MCF 10A (cell line): ENCODE measurements at regions of chr5 and their contacts with region 1.

Region 1: GRCh38 chr5:149828161-149828884 is 98.2 kb downstream of the PPARGC1B start:
- DNase-seq: peak; percentile 99
- H3K4me3 Mint-ChIP-seq: no peak overlapping the region
- H3K27ac Mint-ChIP-seq: peak overlapping the region; percentile 57
- H3K4me1 Mint-ChIP-seq: peaks cover 12% of the 10 kb centered on the region
- H3K27me3 Mint-ChIP-seq: no peaks in the 10 kb centered on the region
- CTCF ChIP-seq: peak; percentile 96

Region 2: DNA sequence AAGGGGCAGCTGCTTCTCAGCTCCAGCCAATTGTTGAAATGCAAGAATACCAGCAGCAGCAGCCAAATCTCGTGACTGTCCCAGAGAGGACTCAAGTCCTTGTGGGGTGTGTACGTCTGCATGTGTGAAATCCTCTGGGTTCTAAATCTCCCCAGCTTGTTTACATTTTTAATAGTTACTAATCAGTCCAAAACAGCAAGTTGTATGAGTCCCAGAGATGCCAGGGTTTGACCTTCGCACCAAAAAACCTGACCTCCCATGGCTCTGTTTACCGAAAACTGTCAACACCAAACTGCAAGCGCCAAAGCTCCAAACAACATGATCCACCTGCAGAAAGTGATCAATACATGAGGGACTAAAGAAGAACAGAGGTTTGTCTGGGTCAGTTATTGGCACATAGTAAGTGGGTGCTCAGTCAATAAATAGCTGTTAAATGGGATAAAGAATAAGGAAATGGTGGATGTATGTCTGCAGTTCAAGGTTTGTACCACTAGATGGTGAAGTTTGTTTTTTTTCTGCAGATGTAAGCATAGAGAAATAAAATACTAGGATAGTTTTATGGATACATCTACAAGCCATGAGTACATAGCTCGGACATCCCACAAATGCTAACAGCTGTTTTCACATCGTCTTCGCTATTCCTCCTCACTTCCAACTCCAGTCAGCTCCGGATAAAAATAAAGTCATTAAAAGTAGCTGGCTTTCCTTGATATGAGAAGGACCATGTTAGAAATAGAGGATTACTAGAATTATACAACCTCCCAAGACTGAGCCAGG is 1087.2 kb before region 1 on chr5:
- CTCF ChIA-PET with region 1: no interaction called
- POLR2A ChIA-PET with region 1: no interaction called
- intact Hi-C with region 1: no loop called
- DNase-seq: peak; percentile 77
- H3K4me3 Mint-ChIP-seq: no peak overlapping the region
- H3K27ac Mint-ChIP-seq: no peak overlapping the region
- H3K4me1 Mint-ChIP-seq: peaks cover 5% of the 10 kb centered on the region
- H3K27me3 Mint-ChIP-seq: no peaks in the 10 kb centered on the region
- CTCF ChIP-seq: peak; percentile 88

Region 3: GRCh38 chr5:149381987-149382340 is 446.4 kb before region 1 on chr5:
- CTCF ChIA-PET with region 1: interaction called, 5 read pairs
- POLR2A ChIA-PET with region 1: no interaction called
- intact Hi-C with region 1: loop called (anchors 5 kb)
- DNase-seq: peak; percentile 78
- H3K4me3 Mint-ChIP-seq: no peak overlapping the region
- H3K27ac Mint-ChIP-seq: no peak overlapping the region
- H3K4me1 Mint-ChIP-seq: no peaks in the 10 kb centered on the region
- H3K27me3 Mint-ChIP-seq: no peaks in the 10 kb centered on the region
- CTCF ChIP-seq: peak; percentile 97

Region 4: GRCh38 chr5:149656576-149657182 is 171.6 kb before region 1 on chr5:
- CTCF ChIA-PET with region 1: interaction called, 12 read pairs
- POLR2A ChIA-PET with region 1: no interaction called
- intact Hi-C with region 1: loop called (anchors 1 kb)
- DNase-seq: peak; percentile 80
- H3K4me3 Mint-ChIP-seq: no peak overlapping the region
- H3K27ac Mint-ChIP-seq: no peak overlapping the region
- H3K4me1 Mint-ChIP-seq: no peaks in the 10 kb centered on the region
- H3K27me3 Mint-ChIP-seq: peaks cover 21% of the 10 kb centered on the region
- CTCF ChIP-seq: peak; percentile 85

Region 5: GRCh38 chr5:149731639-149732323 is 96.5 kb before region 1 on chr5:
- CTCF ChIA-PET with region 1: interaction called, 9 read pairs
- POLR2A ChIA-PET with region 1: interaction called, 4 read pairs
- intact Hi-C with region 1: loop called (anchors 1 kb)
- DNase-seq: peak; percentile 95
- H3K4me3 Mint-ChIP-seq: peak overlapping the region; percentile 94
- H3K27ac Mint-ChIP-seq: peak overlapping the region; percentile 66
- H3K4me1 Mint-ChIP-seq: peaks cover 27% of the 10 kb centered on the region
- H3K27me3 Mint-ChIP-seq: no peaks in the 10 kb centered on the region
- CTCF ChIP-seq: no peak

Region 6: DNA sequence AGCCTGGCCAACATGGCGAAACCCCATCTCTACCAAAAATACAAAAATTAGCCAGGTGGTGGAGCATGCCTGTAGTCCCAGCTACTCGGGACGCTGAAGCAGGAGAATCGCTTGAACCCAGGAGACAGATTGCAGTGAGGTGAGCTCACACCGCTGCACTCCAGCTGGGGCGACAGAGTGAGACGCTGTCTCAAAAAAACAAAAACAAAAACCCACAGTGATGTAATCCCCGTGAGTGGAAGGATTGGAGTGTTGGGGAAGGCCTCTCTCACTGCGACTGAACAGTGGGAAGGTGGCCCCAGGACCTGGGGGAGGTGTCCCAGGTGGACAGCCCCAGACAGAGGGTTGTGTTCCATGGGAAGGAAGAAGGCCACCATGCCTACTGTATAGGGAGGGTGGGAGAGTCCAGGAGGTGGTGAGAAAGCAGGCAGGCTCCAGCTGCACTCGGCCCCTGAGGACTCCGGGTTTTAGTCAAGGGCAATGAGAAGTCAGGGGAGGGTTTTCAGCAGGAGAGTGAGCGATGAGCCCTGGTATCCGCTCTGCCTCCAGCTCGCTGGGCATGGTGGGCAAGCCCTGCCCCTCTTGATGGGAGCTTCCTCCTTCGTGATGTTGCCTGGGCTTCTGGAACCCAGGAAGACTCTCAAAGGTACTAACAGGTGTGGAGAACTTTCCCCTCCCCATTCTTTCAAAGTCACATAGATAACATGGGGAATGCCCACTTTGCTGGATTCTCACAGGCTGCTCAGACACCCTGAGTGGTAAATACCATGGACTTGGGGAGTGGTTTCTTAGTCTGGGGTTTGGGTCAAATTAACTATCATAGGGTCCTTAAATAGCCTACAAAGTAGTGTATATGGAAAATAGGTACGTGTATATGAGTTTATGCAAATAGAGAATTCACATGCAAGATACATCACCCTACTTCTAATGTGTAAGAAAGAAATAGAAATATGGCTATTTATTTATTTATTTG is 23.6 kb before region 1 on chr5:
- CTCF ChIA-PET with region 1: interaction called, 20 read pairs
- POLR2A ChIA-PET with region 1: interaction called, 6 read pairs
- intact Hi-C with region 1: no loop called
- DNase-seq: no peak
- H3K4me3 Mint-ChIP-seq: no peak overlapping the region
- H3K27ac Mint-ChIP-seq: peak overlapping the region; percentile 57
- H3K4me1 Mint-ChIP-seq: peaks cover 39% of the 10 kb centered on the region
- H3K27me3 Mint-ChIP-seq: no peaks in the 10 kb centered on the region
- CTCF ChIP-seq: no peak

Region 7: GRCh38 chr5:149852641-149853330 is 24.5 kb after region 1 on chr5:
- CTCF ChIA-PET with region 1: interaction called, 845 read pairs
- POLR2A ChIA-PET with region 1: interaction called, 5 read pairs
- intact Hi-C with region 1: no loop called
- DNase-seq: peak; percentile 91
- H3K4me3 Mint-ChIP-seq: no peak overlapping the region
- H3K27ac Mint-ChIP-seq: peak overlapping the region; percentile 16
- H3K4me1 Mint-ChIP-seq: peaks cover 17% of the 10 kb centered on the region
- H3K27me3 Mint-ChIP-seq: no peaks in the 10 kb centered on the region
- CTCF ChIP-seq: peak; percentile 87